Mammary epithelial cell (primary cell): ENCODE measurements at regions of chr13 and their contacts with region 1.

Region 1: DNA sequence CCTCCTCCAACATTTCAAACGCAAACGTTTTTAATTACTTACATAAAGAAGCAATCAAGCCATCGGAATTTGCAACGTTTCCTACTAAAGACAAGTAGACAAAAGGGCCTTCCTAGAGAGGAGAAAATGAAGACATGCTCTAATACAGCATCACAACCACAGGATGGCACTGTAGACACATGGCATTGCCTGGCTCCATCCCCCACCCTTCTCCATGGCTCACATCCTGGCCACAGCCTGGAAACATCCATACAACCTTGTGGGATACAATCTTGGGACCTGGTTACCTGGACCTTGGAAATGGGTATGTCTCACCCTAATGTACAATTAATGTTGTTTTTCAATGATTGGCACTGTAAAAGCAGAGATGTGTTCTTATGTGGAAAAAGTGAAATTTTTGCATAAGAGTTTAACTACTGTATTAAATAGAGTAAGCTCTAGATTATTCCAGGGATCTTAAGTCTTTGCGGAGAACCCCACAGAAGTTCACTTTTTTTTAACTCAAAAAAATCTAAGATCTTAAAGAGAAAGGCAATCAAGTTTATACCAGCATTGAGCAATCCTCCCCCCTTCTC is 21.5 kb downstream of the EBPL start:
- DNase-seq: peak; percentile 61
- H3K4me3 ChIP-seq: no peak overlapping the region
- H3K27ac ChIP-seq: no peak overlapping the region
- H3K4me1 ChIP-seq: no peaks in the 10 kb centered on the region
- H3K27me3 ChIP-seq: no peaks in the 10 kb centered on the region
- CTCF ChIP-seq: peak; percentile 66 to 80

Region 2: DNA sequence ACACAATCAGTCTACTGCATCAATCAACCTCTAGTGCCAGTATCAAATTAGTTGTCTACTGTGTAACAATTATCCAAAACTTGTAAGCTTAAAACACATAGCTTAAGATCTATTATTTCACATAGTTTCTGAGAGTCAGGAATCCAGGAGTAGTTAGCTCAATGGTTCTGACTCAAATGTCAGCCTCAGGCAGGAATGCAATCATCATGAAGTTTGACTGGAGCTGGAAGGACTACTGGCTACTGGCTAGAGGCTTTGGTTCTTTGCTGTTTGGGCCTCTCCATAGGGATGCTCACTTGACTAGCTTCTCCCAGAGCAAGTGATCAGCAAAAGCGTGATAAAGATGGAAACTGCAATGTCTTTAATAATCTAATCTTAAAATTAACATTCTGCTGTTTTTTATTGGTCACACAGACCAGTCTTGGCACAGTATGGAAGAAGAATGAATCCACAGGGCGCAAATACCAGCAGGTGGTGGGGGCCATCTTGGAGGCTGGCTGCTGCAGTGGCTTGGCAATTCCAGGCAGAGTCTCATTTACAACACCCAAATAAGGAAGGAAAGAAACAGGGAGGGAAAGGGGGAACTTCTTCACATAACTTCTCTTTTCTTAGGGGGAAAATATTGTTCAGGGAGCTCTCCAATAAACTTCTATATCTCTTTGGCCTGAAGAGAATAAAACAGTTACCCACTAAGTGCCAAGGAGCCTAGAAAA is 241.6 kb before region 1 on chr13:
- CTCF ChIA-PET with region 1: no interaction called
- dilution Hi-C with region 1: no loop called
- in situ Hi-C with region 1: no loop called
- intact Hi-C with region 1: no loop called
- DNase-seq: no peak
- H3K4me3 ChIP-seq: no peak overlapping the region
- H3K27ac ChIP-seq: no peak overlapping the region
- H3K4me1 ChIP-seq: no peaks in the 10 kb centered on the region
- H3K27me3 ChIP-seq: no peaks in the 10 kb centered on the region
- CTCF ChIP-seq: no peak

Region 3: GRCh38 chr13:49620170-49620621 is 49.6 kb before region 1 on chr13:
- CTCF ChIA-PET with region 1: no interaction called
- dilution Hi-C with region 1: no loop called
- in situ Hi-C with region 1: no loop called
- intact Hi-C with region 1: no loop called
- DNase-seq: no peak
- H3K4me3 ChIP-seq: peak overlapping the region in 2 of 3 experiments; percentile 32 to 41
- H3K27ac ChIP-seq: no peak overlapping the region
- H3K4me1 ChIP-seq: no peaks in the 10 kb centered on the region
- H3K27me3 ChIP-seq: no peaks in the 10 kb centered on the region
- CTCF ChIP-seq: no peak

Region 4: DNA sequence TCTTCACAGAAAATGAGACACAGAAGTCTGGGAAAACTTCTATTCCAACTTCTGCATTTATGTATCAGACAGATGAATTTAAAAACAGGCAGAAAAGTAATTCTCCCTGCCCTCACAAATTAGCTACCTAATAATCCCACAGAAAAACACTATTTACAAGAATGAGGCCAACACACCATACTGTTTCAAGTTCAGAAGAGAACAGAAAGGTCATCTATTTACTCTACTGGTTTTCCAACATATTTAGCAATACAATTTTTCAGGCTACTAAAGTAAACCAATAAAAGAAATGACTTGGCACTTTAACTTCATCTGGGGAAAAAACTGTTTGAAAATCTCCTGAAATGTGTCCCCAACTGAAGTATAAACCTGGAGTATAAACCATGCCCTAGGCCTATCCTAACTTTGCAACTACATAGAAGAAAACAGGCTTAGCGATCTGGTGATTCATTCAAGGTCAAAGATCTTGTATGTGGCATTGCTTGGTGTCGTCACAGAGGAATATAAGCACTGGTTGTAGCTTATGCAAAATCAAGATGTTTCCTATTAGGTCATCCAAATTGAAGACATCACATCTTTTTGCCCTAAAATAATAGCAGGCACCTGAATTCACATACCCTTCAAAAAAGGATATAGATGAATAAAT is 41.5 kb after region 1 on chr13:
- CTCF ChIA-PET with region 1: interaction called, 10 read pairs
- dilution Hi-C with region 1: no loop called
- in situ Hi-C with region 1: no loop called
- intact Hi-C with region 1: no loop called
- DNase-seq: peak; percentile 44
- H3K4me3 ChIP-seq: no peak overlapping the region
- H3K27ac ChIP-seq: no peak overlapping the region
- H3K4me1 ChIP-seq: no peaks in the 10 kb centered on the region
- H3K27me3 ChIP-seq: no peaks in the 10 kb centered on the region
- CTCF ChIP-seq: no peak

Region 5: GRCh38 chr13:49759503-49759902 is 89.7 kb after region 1 on chr13:
- CTCF ChIA-PET with region 1: no interaction called
- dilution Hi-C with region 1: no loop called
- in situ Hi-C with region 1: no loop called
- intact Hi-C with region 1: no loop called
- DNase-seq: no peak
- H3K4me3 ChIP-seq: no peak overlapping the region
- H3K27ac ChIP-seq: no peak overlapping the region
- H3K4me1 ChIP-seq: no peaks in the 10 kb centered on the region
- H3K27me3 ChIP-seq: no peaks in the 10 kb centered on the region
- CTCF ChIP-seq: no peak

Region 6: GRCh38 chr13:49836516-49836915 is 166.7 kb after region 1 on chr13:
- CTCF ChIA-PET with region 1: no interaction called
- dilution Hi-C with region 1: no loop called
- in situ Hi-C with region 1: loop called in 1 of 2 experiments (anchors 10 kb)
- intact Hi-C with region 1: no loop called
- DNase-seq: peak; percentile 36
- H3K4me3 ChIP-seq: no peak overlapping the region
- H3K27ac ChIP-seq: no peak overlapping the region
- H3K4me1 ChIP-seq: peaks cover 15% of the 10 kb centered on the region
- H3K27me3 ChIP-seq: no peaks in the 10 kb centered on the region
- CTCF ChIP-seq: no peak

Region 7: DNA sequence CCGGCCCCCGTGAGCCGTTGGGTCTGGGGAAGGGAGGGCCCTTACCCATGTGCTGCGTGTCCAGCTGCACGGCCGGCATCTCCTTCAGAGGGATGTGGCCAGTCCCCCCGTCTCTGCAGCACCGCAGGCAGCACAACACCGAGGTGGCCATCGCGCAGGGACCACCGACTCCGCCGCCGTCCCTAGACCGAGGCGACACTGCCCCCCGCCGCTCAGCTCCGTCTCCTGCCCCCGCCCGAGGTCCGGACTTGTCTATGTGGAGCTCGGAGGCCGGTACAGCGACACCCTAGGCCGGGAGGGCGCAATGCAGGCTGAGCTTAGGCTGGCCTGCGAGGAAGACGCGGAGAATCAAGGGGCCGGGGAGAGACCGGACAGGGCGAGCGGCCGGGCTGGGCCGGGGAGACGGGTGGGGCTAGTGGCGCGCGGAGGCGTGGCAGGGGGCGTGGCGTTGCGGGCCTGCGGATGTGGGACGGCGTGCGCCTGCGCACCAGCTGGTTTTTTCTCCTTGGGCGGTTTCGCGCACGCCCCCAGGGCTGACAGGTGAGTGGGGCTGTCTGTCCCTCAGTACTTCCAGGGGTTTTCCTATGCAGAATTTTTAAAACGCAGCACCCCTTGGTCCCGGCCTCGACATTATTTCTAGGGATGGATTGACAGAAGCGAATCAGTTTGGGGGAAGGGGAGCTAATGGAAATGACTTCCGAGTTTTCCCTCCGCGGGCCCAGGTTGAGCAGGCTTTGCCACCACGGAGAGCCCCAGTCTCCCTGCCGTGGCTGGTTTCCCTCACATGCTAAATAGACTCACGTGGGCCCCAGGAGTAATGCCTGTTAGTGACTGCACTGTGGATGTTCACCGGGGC is 266.5 kb after region 1 on chr13 and contains the start of gene SPRYD7:
- CTCF ChIA-PET with region 1: no interaction called
- dilution Hi-C with region 1: no loop called
- in situ Hi-C with region 1: no loop called
- intact Hi-C with region 1: loop called (anchors 1 kb)
- DNase-seq: peak; percentile 98
- H3K4me3 ChIP-seq: peak within 1 kb of the TSS; percentile 94 to 100 (median 99)
- H3K27ac ChIP-seq: peak within 1 kb of the TSS; percentile 82
- H3K4me1 ChIP-seq: peaks cover 5% of the 10 kb centered on the region
- H3K27me3 ChIP-seq: no peaks in the 10 kb centered on the region
- CTCF ChIP-seq: peak; percentile 82 to 92
- total RNA-seq, gene SPRYD7: 12.0 to 17.0 TPM

Region 8: DNA sequence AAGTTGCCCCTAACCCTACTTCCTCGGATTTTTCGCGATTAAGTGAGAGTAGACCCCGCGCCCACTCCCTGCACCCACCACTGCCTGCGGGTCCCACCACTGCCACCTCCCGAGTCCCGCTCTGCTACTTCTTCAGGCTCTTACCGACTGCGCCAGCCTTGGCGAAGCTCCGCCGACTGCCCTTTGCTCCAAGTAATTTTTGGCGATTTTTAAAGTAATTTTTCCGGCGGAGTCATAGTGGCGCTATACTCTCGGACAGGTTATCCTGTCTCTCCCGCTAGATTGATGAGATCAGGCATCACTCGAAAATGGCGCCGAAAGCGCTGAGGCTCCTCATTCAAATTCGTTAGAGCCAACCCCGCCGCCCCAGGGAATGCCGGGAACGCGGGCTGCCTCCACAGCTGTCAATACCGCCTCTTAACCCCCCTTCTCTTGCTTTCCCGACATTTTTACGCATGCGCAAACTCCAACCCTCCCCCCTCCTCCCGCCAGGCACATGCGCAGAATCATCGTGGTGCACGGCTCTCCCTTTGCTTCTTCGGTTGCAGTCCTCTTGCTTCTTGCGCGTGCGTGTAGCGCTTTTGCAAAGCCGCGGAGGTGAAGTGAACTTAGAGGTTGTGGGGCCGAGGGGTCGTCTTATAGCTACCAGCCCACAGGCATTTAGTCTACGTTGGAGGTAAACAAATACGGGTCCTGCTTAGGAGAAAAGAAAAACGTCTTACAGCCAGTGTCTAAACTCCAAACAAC is 412.0 kb after region 1 on chr13:
- CTCF ChIA-PET with region 1: no interaction called
- dilution Hi-C with region 1: no loop called
- in situ Hi-C with region 1: no loop called
- intact Hi-C with region 1: loop called (anchors 5 kb)
- DNase-seq: peak; percentile 99
- H3K4me3 ChIP-seq: peak overlapping the region; percentile 76 to 99 (median 92)
- H3K27ac ChIP-seq: peak overlapping the region; percentile 90
- H3K4me1 ChIP-seq: no peaks in the 10 kb centered on the region
- H3K27me3 ChIP-seq: no peaks in the 10 kb centered on the region
- CTCF ChIP-seq: peak in 1 of 2 donors; percentile 11

Region 9: GRCh38 chr13:50911937-50912795 is 1242.3 kb after region 1 on chr13:
- CTCF ChIA-PET with region 1: no interaction called
- dilution Hi-C with region 1: no loop called
- in situ Hi-C with region 1: no loop called
- intact Hi-C with region 1: loop called (anchors 5 kb)
- DNase-seq: peak; percentile 65
- H3K4me3 ChIP-seq: no peak overlapping the region
- H3K27ac ChIP-seq: no peak overlapping the region
- H3K4me1 ChIP-seq: peaks cover 22% of the 10 kb centered on the region
- H3K27me3 ChIP-seq: no peaks in the 10 kb centered on the region
- CTCF ChIP-seq: peak; percentile 86 to 93